ENCODE measurements at regions of chr11 and their contacts with region 1.

Region 1: DNA sequence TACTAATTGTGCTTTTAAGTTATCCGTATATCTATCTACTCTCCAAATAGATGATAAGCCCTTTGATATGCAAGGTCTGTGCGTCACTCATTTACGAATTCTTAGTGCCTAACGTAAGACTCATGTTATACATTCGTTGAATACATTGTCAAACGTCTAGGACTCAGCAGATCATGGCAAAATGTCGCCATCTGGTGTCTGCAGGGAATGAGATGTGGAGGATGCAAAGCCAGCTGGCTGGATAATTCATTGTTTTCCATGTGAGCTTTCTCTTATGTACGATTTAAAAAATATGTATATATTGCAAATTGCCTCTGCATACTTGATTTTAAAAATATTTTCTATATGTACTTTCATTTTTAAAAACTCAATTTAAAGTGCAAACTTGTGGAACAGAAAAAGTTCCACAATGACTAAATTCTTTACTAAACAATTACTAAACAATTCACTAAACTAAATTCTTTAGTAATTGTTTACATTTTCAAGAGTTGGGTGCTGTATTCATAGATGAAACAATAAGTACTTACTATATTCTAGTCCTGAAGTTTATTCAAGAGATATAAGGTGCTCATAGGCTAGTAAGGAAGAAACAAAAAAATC is 33.8 kb downstream of the ZNF202 start:
- DNase-seq: peak; percentile 22
- H3K4me3 ChIP-seq: no peak overlapping the region
- H3K27ac ChIP-seq: no peak overlapping the region
- H3K4me1 ChIP-seq: no peaks in the 10 kb centered on the region
- H3K27me3 ChIP-seq: peaks cover 18% of the 10 kb centered on the region
- CTCF ChIP-seq: peak; percentile 82

Region 2: DNA sequence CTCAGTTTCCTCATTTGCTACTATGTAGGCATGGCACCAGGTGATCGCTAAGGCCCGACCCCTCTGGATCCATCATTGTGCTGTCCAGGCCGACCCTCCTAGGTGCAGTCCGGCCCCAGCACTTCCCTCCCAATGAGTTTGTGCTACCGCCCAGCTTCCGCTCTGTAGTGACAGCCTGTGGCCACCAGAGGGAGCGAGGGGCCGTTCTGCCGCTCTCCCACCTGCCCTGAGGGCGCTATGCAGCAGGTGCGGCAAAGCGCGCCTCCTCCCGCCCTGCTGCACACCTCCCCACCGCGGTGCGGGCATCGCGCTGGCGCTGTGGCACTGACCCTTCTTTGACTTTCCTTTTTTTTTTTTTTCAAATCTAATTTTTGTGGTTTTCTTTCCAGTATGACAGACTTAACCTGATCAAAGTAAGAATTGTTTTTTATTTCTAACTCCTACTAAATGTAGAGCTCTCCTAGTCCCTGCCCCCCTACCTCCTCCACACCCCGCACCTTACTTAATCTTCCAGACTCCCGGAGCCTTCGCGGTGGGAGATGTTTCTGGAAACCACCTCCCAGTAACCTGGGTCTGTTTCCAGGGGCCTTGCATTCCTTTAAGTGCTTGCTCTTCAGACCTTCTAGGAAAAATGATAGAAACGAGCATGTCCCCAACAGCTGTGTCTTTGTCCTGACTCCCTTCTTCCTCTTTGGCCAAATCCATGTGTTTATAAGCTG is 127.0 kb before region 1 on chr11:
- intact Hi-C with region 1: loop called (anchors 5 kb)
- DNase-seq: peak; percentile 44
- H3K4me3 ChIP-seq: no peak overlapping the region
- H3K27ac ChIP-seq: no peak overlapping the region
- H3K4me1 ChIP-seq: peaks cover 12% of the 10 kb centered on the region
- H3K27me3 ChIP-seq: peaks cover 4% of the 10 kb centered on the region
- CTCF ChIP-seq: peak; percentile 92

Region 3: GRCh38 chr11:123640677-123641494 is 66.8 kb before region 1 on chr11:
- intact Hi-C with region 1: loop called (anchors 5 kb)
- DNase-seq: peak; percentile 29
- H3K4me3 ChIP-seq: no peak overlapping the region
- H3K27ac ChIP-seq: no peak overlapping the region
- H3K4me1 ChIP-seq: peaks cover 1% of the 10 kb centered on the region
- H3K27me3 ChIP-seq: peaks cover 4% of the 10 kb centered on the region
- CTCF ChIP-seq: peak; percentile 86